K562 (cell line): ENCODE measurements at regions of chrX and their contacts with region 1.

Region 1: GRCh38 chrX:101097546-101098453 is at the start of gene CENPI:
- DNase-seq: peak; percentile 95 to 99 (median 98)
- ATAC-seq: peak; percentile 100
- H3K4me3 ChIP-seq: peak within 1 kb of the TSS; percentile 56
- H3K27ac ChIP-seq: peak within 1 kb of the TSS; percentile 79
- H3K4me1 ChIP-seq: no peaks in the 10 kb centered on the region; a peak in 1 of 5 replicates
- H3K27me3 ChIP-seq: no peaks in the 10 kb centered on the region
- CTCF ChIP-seq: no peak
- EP300 ChIP-seq: peak; percentile 50; the same call in 1 of the 2 replicates
- POLR2A ChIP-seq: peak; percentile 74
- RAD21 ChIP-seq: no peak
- polyA plus RNA-seq, gene CENPI: 6.6 to 8.9 TPM

Region 2: GRCh38 chrX:101051549-101052302 is 46.1 kb before region 1 on chrX and contains the start of gene TRMT2B:
- CTCF ChIA-PET with region 1: no interaction called
- POLR2A ChIA-PET with region 1: no interaction called
- in situ Hi-C with region 1: no loop called
- intact Hi-C with region 1: loop called (anchors 5 kb)
- DNase-seq: peak; percentile 84 to 89 (median 86)
- ATAC-seq: peak; percentile 99
- H3K4me3 ChIP-seq: peak within 1 kb of the TSS; percentile 47
- H3K27ac ChIP-seq: peak within 1 kb of the TSS; percentile 95
- H3K4me1 ChIP-seq: peaks cover 0 to under 1% of the 10 kb centered on the region in 2 experiments; a peak in 2 of 5 replicates
- H3K27me3 ChIP-seq: no peaks in the 10 kb centered on the region
- CTCF ChIP-seq: no peak
- EP300 ChIP-seq: no peak
- POLR2A ChIP-seq: peak; percentile 80
- RAD21 ChIP-seq: no peak
- polyA plus RNA-seq, gene TRMT2B: 3.9 to 8.6 TPM

Region 3: GRCh38 chrX:101191217-101191750 is 93.5 kb after region 1 on chrX:
- CTCF ChIA-PET with region 1: no interaction called
- POLR2A ChIA-PET with region 1: no interaction called
- in situ Hi-C with region 1: no loop called
- intact Hi-C with region 1: loop called (anchors 5 kb)
- DNase-seq: peak; percentile 68 to 86 (median 78)
- ATAC-seq: peak; percentile 99
- H3K4me3 ChIP-seq: peak overlapping the region; percentile 27
- H3K27ac ChIP-seq: peak overlapping the region; percentile 68
- H3K4me1 ChIP-seq: peaks cover 0 to 6% of the 10 kb centered on the region in 2 experiments; a peak in 3 of 5 replicates
- H3K27me3 ChIP-seq: no peaks in the 10 kb centered on the region
- CTCF ChIP-seq: no peak
- EP300 ChIP-seq: no peak
- POLR2A ChIP-seq: 0 out of 2 replicates have a peak, but pooled peaks have one; percentile 32
- RAD21 ChIP-seq: no peak